ENCODE measurements at regions of chr7 and their contacts with region 1.

Region 1: GRCh38 chr7:101085162-101085987 is at the start of gene TRIM56:
- DNase-seq: peak; percentile 94
- H3K4me3 ChIP-seq: peak within 1 kb of the TSS; percentile 64 to 74 (median 70)
- H3K27ac ChIP-seq: peak within 1 kb of the TSS; percentile 85 to 91 (median 88)
- H3K4me1 ChIP-seq: peaks cover 0 to 36% (median 24%) of the 10 kb centered on the region in 4 donors
- H3K27me3 ChIP-seq: no peaks in the 10 kb centered on the region
- CTCF ChIP-seq: no peak
- EP300 ChIP-seq: no peak
- POLR2A ChIP-seq: no peak
- total RNA-seq, gene TRIM56: 11.8 to 23.3 (median 13.7) TPM

Region 2: DNA sequence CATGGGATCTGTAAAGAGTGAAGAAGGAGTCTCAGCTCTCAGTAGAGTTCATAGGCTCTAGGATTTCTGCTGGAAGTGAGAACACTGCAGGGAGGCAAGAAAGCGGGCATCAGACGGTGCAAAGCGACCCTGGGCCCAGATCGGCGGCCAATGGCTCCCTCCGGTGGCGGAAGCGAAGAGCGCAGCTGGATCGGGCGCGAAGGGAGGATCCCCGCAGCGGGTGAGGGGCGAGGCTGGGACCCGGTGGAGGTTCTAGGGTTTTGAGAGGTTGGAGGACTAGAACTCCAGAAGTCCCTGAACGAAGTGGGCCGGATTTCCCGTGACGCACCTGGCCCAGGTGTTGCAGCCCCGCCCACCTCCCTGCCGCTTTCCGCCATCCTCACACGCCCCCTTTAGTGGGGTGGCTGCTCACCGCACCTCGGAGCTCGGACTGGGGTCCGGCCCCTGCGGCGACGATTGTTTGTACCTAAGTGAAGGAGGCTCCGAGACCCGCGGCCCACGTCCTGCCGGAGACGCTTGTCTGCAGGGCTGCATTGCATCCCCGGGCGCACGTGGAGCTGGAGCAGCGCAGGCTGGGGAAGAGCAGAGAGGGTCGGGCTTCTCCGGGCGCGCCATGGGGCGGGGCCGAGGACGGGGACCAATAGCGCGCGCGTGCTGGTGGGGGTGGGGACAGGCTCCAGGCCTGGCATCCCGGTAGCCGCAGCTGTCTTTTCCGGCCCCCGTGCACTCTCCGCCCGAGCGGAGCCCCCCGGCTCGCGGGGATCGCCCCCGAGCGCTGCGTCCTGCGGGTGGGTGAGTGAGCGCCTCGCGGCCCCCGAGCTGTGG is 233.1 kb before region 1 on chr7 and contains the start of gene SLC12A9:
- intact Hi-C with region 1: no loop called
- DNase-seq: peak; percentile 95
- H3K4me3 ChIP-seq: peak within 1 kb of the TSS; percentile 46 to 81 (median 63)
- H3K27ac ChIP-seq: peak within 1 kb of the TSS; percentile 72 to 84 (median 78)
- H3K4me1 ChIP-seq: peaks cover 0 to 25% (median 12%) of the 10 kb centered on the region in 4 donors
- H3K27me3 ChIP-seq: no peaks in the 10 kb centered on the region
- CTCF ChIP-seq: peak; percentile 85 to 96 (median 94)
- EP300 ChIP-seq: no peak
- POLR2A ChIP-seq: peak in 1 of 2 donors; percentile 36
- total RNA-seq, gene SLC12A9: 10.4 to 17.9 (median 14.8) TPM

Region 3: GRCh38 chr7:101099969-101100781 is 14.8 kb after region 1 on chr7:
- intact Hi-C with region 1: loop called (anchors 2 kb)
- DNase-seq: peak; percentile 98
- H3K4me3 ChIP-seq: no peak overlapping the region
- H3K27ac ChIP-seq: peak overlapping the region; percentile 77 to 85 (median 82)
- H3K4me1 ChIP-seq: peaks cover 0 to 26% (median 18%) of the 10 kb centered on the region in 4 donors
- H3K27me3 ChIP-seq: no peaks in the 10 kb centered on the region
- CTCF ChIP-seq: no peak
- EP300 ChIP-seq: peak in 2 of 4 donors; percentile 77 to 84
- POLR2A ChIP-seq: no peak